SK-N-SH (cell line): ENCODE measurements at regions of chr11 and their contacts with region 1.

Region 1: GRCh38 chr11:34487430-34487829 is 26.2 kb downstream of the ELF5 start:
- DNase-seq: no peak
- H3K4me3 ChIP-seq: no peak overlapping the region
- H3K27ac ChIP-seq: no peak overlapping the region
- H3K4me1 ChIP-seq: no peaks in the 10 kb centered on the region
- H3K27me3 ChIP-seq: no peaks in the 10 kb centered on the region; the same call in 1 of the 2 replicates
- CTCF ChIP-seq: no peak
- EP300 ChIP-seq: no peak
- RAD21 ChIP-seq: no peak

Region 2: DNA sequence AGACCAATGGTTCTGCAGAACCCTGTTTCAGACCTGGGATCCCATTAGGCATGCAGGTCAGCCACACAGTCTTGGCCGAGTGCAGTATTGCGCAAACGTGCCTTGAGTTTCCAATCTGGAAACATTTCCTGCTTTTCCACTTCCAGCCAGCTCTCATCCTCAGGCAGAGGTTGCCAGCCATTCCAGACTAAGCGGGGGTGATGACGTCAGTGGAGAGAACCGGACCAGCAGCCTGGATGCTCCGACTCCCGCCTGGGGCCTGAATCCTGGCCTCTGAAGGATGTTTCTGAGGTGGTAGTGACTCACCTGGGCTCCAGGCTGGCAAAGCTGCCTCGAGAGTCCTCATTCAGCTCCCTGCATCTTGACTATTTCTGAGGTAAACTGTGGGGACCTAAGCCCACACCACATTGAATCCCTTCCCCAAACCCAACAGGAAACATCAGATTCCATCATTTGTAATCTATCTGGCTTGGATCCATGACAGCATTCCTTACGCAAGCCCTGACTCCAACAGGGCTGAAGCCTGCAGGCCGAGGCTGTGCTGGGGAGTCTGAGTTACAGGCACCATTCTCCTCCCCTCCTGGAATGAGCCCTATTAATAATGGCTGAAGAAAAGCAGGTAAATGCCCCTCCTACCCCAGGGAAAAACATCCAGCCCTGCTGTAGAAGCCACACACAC is 212.6 kb before region 1 on chr11:
- CTCF ChIA-PET with region 1: no interaction called
- POLR2A ChIA-PET with region 1: no interaction called
- DNase-seq: peak; percentile 56
- H3K4me3 ChIP-seq: no peak overlapping the region
- H3K27ac ChIP-seq: peak overlapping the region; percentile 74
- H3K4me1 ChIP-seq: peaks cover 21 to 39% of the 10 kb centered on the region in 2 experiments
- H3K27me3 ChIP-seq: no peaks in the 10 kb centered on the region
- CTCF ChIP-seq: no peak
- EP300 ChIP-seq: peak in 1 of 2 experiments; percentile 35; a peak in 1 of 4 replicates
- RAD21 ChIP-seq: no peak

Region 3: DNA sequence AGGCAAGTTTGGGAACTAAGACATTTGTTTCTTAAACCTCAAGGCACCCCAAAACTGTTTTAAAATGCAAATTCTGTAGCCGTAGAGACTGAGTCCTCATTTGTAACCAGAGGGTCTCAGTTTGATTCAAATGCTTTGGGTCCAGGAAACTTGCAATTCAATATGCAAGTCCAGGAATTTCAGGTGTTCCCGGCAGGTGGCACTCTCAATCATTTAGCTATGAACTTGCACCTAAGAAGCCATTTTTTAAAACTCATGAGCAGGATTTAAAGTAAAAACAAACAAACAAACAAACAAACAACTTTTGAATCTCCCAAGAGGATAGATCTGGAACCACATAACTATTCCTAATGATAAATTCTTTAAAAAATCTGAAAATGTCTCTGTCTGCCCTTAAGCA is 120.9 kb before region 1 on chr11:
- CTCF ChIA-PET with region 1: interaction called, 68 read pairs
- POLR2A ChIA-PET with region 1: interaction called, 5 read pairs
- DNase-seq: peak; percentile 36
- H3K4me3 ChIP-seq: no peak overlapping the region
- H3K27ac ChIP-seq: no peak overlapping the region
- H3K4me1 ChIP-seq: peaks cover 0 to 7% of the 10 kb centered on the region in 2 experiments; a peak in 2 of 4 replicates
- H3K27me3 ChIP-seq: no peaks in the 10 kb centered on the region
- CTCF ChIP-seq: peak; percentile 42
- EP300 ChIP-seq: no peak
- RAD21 ChIP-seq: peak; percentile 59

Region 4: GRCh38 chr11:34546511-34547222 is 59.2 kb after region 1 on chr11:
- CTCF ChIA-PET with region 1: no interaction called
- POLR2A ChIA-PET with region 1: no interaction called
- DNase-seq: no peak
- H3K4me3 ChIP-seq: no peak overlapping the region
- H3K27ac ChIP-seq: no peak overlapping the region
- H3K4me1 ChIP-seq: no peaks in the 10 kb centered on the region
- H3K27me3 ChIP-seq: peaks cover 23% of the 10 kb centered on the region; the same call in 1 of the 2 replicates
- CTCF ChIP-seq: no peak
- EP300 ChIP-seq: no peak
- RAD21 ChIP-seq: no peak